Activated naive CD4-positive, alpha-beta T cell treated with anti-CD3 and anti-CD28 coated beads for 36 hours (primary cell): ENCODE measurements at regions of chr18 and their contacts with region 1.

Region 1: GRCh38 chr18:10787293-10787901 is 261.6 kb downstream of the NAPG start:
- DNase-seq: peak; percentile 94
- H3K4me3 Mint-ChIP-seq: no peak overlapping the region
- H3K27ac Mint-ChIP-seq: no peak overlapping the region
- H3K4me1 Mint-ChIP-seq: peaks cover 2% of the 10 kb centered on the region
- H3K27me3 Mint-ChIP-seq: peaks cover 14% of the 10 kb centered on the region

Region 2: GRCh38 chr18:10560450-10561045 is 226.8 kb before region 1 on chr18:
- CTCF ChIA-PET with region 1: interaction called, 5 read pairs
- intact Hi-C with region 1: loop called (anchors 2 kb)
- DNase-seq: peak; percentile 82
- H3K4me3 Mint-ChIP-seq: no peak overlapping the region
- H3K27ac Mint-ChIP-seq: no peak overlapping the region
- H3K4me1 Mint-ChIP-seq: peaks cover 3% of the 10 kb centered on the region
- H3K27me3 Mint-ChIP-seq: no peaks in the 10 kb centered on the region

Region 3: DNA sequence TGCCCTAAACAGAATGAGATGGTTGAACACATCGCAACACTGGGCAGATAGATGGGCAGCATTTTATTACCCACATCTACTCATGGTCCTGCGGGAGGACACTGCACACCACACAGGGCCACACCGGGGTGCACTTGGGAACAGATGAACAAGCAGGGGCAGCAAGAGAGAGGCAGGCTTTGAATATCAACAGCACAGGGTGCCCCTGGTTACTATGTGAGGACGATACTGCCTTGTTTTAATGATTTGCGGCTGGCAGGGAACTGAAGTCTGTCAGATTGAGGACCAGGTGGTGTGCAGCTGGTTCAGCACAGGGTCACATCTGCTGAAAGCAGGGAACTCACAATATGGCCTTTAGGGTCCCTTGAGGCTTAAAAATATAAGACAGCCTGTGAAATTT is 166.3 kb after region 1 on chr18:
- CTCF ChIA-PET with region 1: no interaction called
- intact Hi-C with region 1: no loop called
- DNase-seq: no peak
- H3K4me3 Mint-ChIP-seq: no peak overlapping the region
- H3K27ac Mint-ChIP-seq: no peak overlapping the region
- H3K4me1 Mint-ChIP-seq: no peaks in the 10 kb centered on the region
- H3K27me3 Mint-ChIP-seq: peaks cover 7% of the 10 kb centered on the region

Region 4: GRCh38 chr18:11040823-11041656 is 253.6 kb after region 1 on chr18:
- CTCF ChIA-PET with region 1: interaction called, 3 read pairs
- intact Hi-C with region 1: loop called (anchors 1 kb)
- DNase-seq: peak; percentile 30
- H3K4me3 Mint-ChIP-seq: no peak overlapping the region
- H3K27ac Mint-ChIP-seq: no peak overlapping the region
- H3K4me1 Mint-ChIP-seq: no peaks in the 10 kb centered on the region
- H3K27me3 Mint-ChIP-seq: peaks cover 16% of the 10 kb centered on the region

Region 5: GRCh38 chr18:11482271-11482670 is 694.9 kb after region 1 on chr18:
- CTCF ChIA-PET with region 1: no interaction called
- intact Hi-C with region 1: no loop called
- DNase-seq: no peak
- H3K4me3 Mint-ChIP-seq: no peak overlapping the region
- H3K27ac Mint-ChIP-seq: no peak overlapping the region
- H3K4me1 Mint-ChIP-seq: no peaks in the 10 kb centered on the region
- H3K27me3 Mint-ChIP-seq: peaks cover 9% of the 10 kb centered on the region

Region 6: GRCh38 chr18:11518788-11519685 is 731.6 kb after region 1 on chr18:
- CTCF ChIA-PET with region 1: interaction called, 3 read pairs
- intact Hi-C with region 1: loop called (anchors 2 kb)
- DNase-seq: peak; percentile 69
- H3K4me3 Mint-ChIP-seq: no peak overlapping the region
- H3K27ac Mint-ChIP-seq: no peak overlapping the region
- H3K4me1 Mint-ChIP-seq: no peaks in the 10 kb centered on the region
- H3K27me3 Mint-ChIP-seq: peaks cover 4% of the 10 kb centered on the region

Region 7: DNA sequence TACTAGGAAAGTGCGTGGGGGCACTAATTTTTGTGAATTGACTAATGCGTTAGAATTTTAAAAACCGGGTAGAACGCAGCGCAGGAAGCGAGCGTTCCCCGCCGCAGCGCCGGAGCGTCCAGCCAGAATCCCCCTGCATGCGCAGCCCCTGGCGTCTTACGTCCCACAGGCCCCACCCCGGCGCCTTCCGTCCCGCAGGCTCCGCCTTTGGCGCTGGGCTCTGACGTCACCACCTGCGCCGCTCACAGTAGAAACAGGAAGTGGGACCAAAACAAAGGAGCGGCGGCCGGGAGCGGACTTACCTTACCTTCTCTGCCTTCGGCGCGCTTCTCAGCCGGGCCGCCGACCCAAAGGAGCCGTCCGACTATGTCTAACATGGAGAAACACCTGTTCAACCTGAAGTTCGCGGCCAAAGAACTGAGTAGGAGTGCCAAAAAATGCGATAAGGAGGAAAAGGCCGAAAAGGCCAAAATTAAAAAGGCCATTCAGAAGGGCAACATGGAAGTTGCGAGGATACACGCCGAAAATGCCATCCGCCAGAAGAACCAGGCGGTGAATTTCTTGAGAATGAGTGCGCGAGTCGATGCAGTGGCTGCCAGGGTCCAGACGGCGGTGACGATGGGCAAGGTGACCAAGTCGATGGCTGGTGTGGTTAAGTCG is 1063.9 kb after region 1 on chr18 and contains the start of gene CHMP1B:
- CTCF ChIA-PET with region 1: no interaction called
- intact Hi-C with region 1: loop called (anchors 2 kb)
- DNase-seq: peak; percentile 98
- H3K4me3 Mint-ChIP-seq: peak within 1 kb of the TSS; percentile 100
- H3K27ac Mint-ChIP-seq: peak within 1 kb of the TSS; percentile 100
- H3K4me1 Mint-ChIP-seq: peaks cover 31% of the 10 kb centered on the region
- H3K27me3 Mint-ChIP-seq: no peaks in the 10 kb centered on the region
- total RNA-seq, gene CHMP1B: 23.2 TPM